ENCODE measurements at regions of chr10 and their contacts with region 1.

Region 1: DNA sequence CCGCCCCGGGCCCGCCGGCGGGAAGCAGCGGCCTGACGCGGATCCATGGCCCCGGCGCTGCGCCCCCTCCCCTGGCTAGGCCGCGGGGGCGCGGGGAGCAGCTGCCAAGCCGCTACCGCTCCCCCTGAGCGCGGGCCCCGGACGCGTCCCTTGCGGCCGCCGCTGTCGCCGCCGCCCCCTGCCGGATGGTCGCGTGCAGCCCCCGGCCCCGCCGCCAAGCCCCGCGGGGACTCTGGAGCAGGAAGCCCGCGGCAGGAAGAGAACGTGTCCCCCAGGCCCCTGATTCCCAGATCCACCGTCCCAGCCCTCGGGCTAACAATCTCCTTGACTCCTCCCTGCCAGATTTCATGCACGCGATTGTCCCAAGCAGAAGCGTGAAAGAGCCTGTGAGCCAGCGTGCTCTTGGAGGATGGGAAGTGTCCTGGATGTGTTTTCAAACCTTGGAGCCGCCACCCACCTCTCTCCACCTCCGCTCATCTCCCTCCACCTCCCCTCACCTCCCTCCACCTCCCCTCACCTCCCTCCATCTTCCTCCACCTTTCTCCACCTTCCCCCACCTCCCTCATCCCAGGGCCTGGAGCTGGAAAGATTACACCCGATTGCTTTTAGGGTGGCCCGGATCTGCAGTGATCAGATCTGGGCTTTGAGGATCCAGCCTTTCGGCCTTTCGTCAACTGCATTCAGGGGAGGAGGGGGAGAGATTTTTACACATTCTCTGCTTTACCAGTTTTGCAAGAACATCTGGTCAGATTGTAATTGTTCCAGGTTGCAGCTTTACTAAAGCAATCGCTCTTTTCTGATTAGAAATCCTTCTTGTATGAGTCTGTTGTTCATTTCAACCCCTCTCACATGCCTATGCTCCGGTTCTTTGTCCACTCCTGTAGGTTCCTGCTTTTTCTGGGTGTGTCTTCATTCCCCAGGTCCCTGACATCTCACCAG is 570 bp upstream of the PRTFDC1 start:
- DNase-seq: peak; percentile 85
- H3K4me3 Mint-ChIP-seq: peak overlapping the region; percentile 78
- H3K27ac Mint-ChIP-seq: peak overlapping the region; percentile 82
- H3K4me1 Mint-ChIP-seq: peaks cover 21% of the 10 kb centered on the region
- H3K27me3 Mint-ChIP-seq: peaks cover 2% of the 10 kb centered on the region

Region 2: DNA sequence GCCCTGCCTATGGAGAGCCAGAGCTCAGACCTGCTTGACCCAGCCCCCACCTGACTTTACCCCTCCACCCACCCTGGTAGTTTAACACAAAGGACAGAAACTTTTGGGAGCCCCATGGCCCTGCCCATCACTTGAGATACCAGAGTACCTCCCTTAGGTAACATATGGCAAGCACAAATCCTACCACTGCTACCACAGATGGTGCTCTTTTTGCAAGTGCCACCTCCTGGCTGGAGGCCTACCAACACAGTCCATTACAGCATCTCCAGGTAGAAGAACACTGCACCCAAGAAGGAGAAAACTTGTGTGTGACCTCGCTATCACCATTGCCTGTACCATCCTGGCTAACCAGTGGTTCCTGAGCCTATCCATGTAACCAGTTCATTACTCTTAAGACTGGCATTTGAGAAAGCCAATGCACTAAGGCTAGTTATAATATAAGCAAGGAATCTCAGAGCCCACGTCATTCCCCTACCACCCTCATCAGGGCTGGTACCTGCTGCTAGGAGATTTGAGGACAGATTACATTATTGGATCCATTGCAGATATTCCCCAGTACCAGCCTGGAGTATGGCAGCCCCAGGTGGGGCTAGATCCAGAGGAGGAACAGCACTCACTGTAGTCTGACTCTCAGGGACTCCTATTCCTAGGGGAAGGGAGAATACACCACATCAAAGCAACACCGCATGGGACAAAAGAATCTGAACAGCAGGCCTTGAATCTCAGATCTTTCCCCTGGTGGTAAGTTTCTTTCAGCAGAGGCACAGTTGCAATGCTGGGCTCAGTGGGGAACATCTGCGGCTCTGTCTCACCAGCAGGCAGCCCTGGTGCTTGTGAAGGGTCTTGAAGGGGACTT is 118.4 kb before region 1 on chr10:
- intact Hi-C with region 1: no loop called
- DNase-seq: no peak
- H3K4me3 Mint-ChIP-seq: no peak overlapping the region
- H3K27ac Mint-ChIP-seq: no peak overlapping the region
- H3K4me1 Mint-ChIP-seq: peaks cover 5% of the 10 kb centered on the region
- H3K27me3 Mint-ChIP-seq: peaks cover 2% of the 10 kb centered on the region

Region 3: GRCh38 chr10:24901686-24902399 is 51.1 kb before region 1 on chr10:
- intact Hi-C with region 1: loop called (anchors 5 kb)
- DNase-seq: no peak
- H3K4me3 Mint-ChIP-seq: peak overlapping the region; percentile 62
- H3K27ac Mint-ChIP-seq: peak overlapping the region; percentile 85
- H3K4me1 Mint-ChIP-seq: peaks cover 30% of the 10 kb centered on the region
- H3K27me3 Mint-ChIP-seq: no peaks in the 10 kb centered on the region

Region 4: DNA sequence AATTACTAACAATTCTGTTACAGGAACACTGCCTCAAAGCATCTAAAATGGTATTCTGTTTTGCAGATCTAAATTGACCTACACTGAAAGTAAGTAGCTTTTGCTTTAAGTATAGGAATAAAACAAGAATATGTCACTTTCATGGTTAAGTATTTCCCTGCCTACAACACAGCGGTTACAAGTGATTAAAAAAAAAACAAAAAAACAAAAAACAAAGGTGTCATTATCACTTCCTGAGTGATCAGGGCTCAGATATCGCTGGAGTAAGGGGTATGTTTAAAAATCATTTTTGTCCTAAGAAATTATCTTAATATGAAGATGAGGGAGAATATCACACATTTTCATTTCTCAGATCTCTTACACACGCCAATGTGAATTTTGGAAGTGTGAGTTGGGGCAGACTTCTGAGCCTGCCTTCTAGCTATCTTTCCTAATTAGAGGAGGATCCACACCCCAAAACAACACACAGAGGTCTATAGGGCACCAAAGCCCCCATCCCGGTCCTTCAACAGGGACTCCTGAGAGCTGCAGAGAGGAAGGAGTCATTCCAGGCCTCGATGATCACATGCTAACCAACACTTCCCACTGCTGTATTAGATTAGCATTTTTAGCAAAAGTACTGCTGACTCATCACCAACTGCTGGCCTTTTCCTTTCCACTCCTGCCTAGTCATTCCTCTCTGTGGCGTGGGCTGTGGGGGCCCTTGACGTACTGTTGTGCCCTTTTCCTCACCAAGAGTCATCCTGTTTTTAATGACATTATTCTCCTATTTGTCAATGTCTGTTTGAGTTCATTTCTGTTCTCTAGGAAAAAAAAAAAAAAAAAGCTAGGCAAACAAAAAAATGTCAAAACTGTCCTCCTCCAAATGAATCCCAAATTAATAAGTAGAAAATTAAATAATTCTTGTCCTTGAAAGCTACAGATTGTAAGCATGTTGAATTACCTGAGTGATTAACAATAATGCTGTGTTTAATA is 31.8 kb before region 1 on chr10:
- intact Hi-C with region 1: no loop called
- DNase-seq: peak; percentile 77
- H3K4me3 Mint-ChIP-seq: peak overlapping the region; percentile 55
- H3K27ac Mint-ChIP-seq: peak overlapping the region; percentile 93
- H3K4me1 Mint-ChIP-seq: peaks cover 23% of the 10 kb centered on the region
- H3K27me3 Mint-ChIP-seq: no peaks in the 10 kb centered on the region

Region 5: DNA sequence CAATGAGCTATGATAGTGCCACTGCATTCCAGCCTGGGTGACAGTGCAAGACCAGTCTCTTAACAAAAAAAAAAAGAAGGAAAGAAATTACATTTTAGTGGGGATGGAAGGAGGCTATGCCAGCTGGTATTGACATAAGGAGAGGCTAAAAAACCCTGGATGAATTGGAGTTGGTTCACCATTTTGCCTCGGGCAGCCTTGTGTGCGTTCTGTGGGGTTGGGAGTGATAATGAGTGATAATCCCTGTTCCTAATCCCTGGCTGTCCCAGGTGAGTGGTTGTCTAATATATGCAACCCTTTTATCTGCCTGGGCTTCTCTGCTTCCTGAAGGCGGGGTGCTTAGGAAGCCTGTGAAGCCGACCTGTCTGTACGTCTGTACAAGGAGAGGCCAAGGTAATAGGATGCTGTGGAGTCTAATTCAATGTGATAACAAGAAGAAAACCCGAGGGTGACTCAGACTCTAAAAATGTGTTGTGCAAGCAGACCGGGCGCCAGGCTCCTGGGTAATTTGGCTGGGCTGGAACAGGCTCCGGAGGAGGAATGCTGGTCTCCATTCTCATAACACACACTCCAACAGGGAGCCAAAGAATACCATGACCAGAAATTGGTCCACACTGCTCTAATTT is 106.9 kb after region 1 on chr10:
- intact Hi-C with region 1: loop called (anchors 10 kb)
- DNase-seq: no peak
- H3K4me3 Mint-ChIP-seq: no peak overlapping the region
- H3K27ac Mint-ChIP-seq: no peak overlapping the region
- H3K4me1 Mint-ChIP-seq: peaks cover 22% of the 10 kb centered on the region
- H3K27me3 Mint-ChIP-seq: peaks cover 3% of the 10 kb centered on the region

Measured in activated CD4-positive, alpha-beta T cell treated with anti-CD3 and anti-CD28 coated beads, Interleukin-2, amount 10 ng/mL, durations not matched to agents 24 days and 14 days (primary cell).